MCF 10A (cell line): ENCODE measurements at regions of chr6 and their contacts with region 1.

Region 1: GRCh38 chr6:113994918-113995342 is 24.0 kb upstream of the HDAC2 start:
- DNase-seq: peak; percentile 88
- H3K4me3 Mint-ChIP-seq: no peak overlapping the region
- H3K27ac Mint-ChIP-seq: no peak overlapping the region
- H3K4me1 Mint-ChIP-seq: peaks cover 31% of the 10 kb centered on the region
- H3K27me3 Mint-ChIP-seq: no peaks in the 10 kb centered on the region
- CTCF ChIP-seq: peak; percentile 94

Region 2: DNA sequence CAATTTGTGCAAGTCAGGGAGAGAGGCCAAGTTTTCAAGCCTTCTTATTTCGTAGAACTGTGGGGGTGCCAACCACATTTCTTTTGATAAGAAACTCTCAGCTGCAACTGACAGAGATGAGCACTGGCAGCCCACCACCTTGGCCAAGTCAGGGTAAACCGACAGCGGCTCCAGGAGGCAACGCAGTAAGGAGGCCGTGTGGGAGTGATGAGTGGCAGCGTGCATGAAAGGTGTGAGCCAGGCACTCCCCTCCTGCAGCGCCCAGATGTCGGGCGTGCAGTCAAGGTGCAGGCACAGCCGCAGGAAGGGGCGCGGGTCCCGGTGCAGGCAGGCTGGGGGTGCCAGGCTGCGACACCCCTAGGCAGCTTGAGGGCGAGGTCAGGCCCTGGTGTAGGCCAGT is 25.3 kb after region 1 on chr6:
- CTCF ChIA-PET with region 1: interaction called, 4 read pairs
- POLR2A ChIA-PET with region 1: no interaction called
- intact Hi-C with region 1: loop called (anchors 2 kb)
- DNase-seq: no peak
- H3K4me3 Mint-ChIP-seq: no peak overlapping the region
- H3K27ac Mint-ChIP-seq: no peak overlapping the region
- H3K4me1 Mint-ChIP-seq: peaks cover 23% of the 10 kb centered on the region
- H3K27me3 Mint-ChIP-seq: no peaks in the 10 kb centered on the region
- CTCF ChIP-seq: no peak

Region 3: DNA sequence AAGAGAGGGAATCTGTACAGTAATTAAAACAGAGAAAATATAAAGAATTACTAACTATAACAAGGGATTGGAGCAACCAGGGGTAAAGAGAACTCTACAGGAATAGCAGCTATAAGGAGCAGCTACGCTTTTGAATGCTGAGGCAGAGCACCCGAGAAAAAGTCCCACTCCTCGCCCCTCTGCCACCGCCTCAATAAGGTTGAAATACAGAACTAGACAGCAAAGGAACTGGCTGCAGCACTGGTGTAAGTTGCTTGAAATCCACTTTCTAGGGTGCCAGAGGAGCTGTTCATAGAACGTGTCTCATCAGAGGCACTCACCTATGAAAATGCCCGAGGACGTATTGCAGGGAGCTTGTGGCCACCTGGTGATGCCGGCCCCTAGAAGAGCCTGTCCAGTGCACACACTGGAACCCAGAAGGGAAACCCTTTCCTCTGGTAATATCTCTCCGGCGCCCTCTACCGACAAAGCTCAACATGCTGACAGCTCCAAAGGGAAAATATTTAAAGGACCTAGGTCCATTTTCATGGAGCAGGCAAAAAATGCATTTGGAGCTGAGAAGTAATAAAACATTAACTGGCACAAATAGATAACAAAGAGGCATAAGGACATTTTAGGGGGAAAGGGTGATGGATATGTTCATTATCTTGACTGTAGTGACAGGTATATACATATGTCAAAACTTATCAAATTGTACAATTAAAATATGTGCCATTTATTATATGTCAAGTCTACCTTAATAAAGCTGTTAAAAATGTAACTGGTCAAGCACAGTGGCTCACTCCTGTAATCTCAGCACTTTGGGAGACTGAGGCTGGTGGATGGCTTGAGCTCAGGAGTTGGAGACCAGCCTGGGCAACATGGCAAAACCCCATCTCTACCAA is 113.4 kb after region 1 on chr6:
- CTCF ChIA-PET with region 1: interaction called, 116 read pairs
- POLR2A ChIA-PET with region 1: no interaction called
- intact Hi-C with region 1: loop called (anchors 1 kb)
- DNase-seq: peak; percentile 81
- H3K4me3 Mint-ChIP-seq: no peak overlapping the region
- H3K27ac Mint-ChIP-seq: no peak overlapping the region
- H3K4me1 Mint-ChIP-seq: no peaks in the 10 kb centered on the region
- H3K27me3 Mint-ChIP-seq: peaks cover 63% of the 10 kb centered on the region
- CTCF ChIP-seq: peak; percentile 75

Region 4: DNA sequence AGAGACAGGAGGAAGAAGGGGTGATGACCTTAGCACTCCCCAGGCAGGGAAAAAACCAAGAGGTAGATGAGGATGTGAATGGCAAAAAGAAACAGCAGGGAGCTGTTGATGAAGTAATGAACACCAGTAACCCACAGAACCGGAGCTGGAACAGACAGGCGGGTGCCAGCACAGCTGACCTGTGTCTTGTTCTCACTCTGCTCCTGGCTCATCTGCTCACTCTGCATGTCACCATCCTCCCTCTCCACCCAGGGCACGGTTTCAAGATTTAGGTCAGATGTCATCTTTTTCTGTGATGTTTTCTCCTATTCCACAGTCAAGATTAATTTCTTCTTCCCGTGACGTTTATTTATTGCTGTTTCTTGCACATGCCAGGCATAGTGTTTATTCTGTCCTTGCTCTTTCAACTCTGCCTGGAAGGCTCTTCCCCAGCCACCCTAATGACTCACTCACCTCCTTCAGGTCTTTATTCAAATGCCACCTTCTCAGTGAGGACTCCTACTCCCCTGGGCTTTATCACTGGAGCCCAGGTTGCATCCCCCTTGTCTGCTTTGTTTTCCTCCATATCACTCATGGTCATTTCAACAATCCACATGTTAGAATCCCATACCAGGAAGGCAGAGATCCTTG is 140.5 kb after region 1 on chr6:
- CTCF ChIA-PET with region 1: no interaction called
- POLR2A ChIA-PET with region 1: no interaction called
- intact Hi-C with region 1: no loop called
- DNase-seq: no peak
- H3K4me3 Mint-ChIP-seq: no peak overlapping the region
- H3K27ac Mint-ChIP-seq: no peak overlapping the region
- H3K4me1 Mint-ChIP-seq: no peaks in the 10 kb centered on the region
- H3K27me3 Mint-ChIP-seq: peaks cover 86% of the 10 kb centered on the region
- CTCF ChIP-seq: no peak

Region 5: GRCh38 chr6:114176726-114177125 is 181.8 kb after region 1 on chr6:
- CTCF ChIA-PET with region 1: no interaction called
- POLR2A ChIA-PET with region 1: no interaction called
- intact Hi-C with region 1: no loop called
- DNase-seq: no peak
- H3K4me3 Mint-ChIP-seq: no peak overlapping the region
- H3K27ac Mint-ChIP-seq: no peak overlapping the region
- H3K4me1 Mint-ChIP-seq: no peaks in the 10 kb centered on the region
- H3K27me3 Mint-ChIP-seq: peaks cover 91% of the 10 kb centered on the region
- CTCF ChIP-seq: no peak

Region 6: DNA sequence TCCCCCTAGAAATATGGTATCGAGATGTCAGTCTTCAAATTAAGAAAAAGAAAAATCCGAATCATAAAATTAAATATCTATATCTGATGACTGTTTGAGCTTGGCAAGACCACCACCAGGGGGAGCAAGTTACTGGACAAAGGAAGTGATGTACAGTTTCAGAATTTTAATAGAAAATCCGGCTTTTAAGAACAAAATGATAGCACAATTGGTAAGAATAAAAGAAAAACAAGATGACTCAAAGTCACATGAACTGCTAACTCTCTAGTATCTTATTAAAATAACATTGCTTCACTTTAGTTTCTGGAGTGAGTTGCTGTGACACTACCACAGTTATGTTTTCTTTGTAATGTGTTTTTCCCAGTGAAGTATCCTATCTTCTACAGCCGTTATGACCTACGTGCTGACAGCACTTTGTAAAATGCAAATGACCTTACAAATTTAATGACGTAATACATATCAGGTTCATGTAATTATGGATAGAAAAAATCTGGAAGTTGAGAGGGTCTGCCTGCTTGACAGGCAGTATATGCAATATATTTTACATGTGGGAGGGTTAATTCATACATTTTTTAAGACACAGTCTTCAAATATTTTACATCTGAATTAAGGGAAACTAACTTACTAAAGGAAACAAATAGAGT is 753.2 kb after region 1 on chr6:
- CTCF ChIA-PET with region 1: no interaction called
- POLR2A ChIA-PET with region 1: no interaction called
- intact Hi-C with region 1: loop called (anchors 10 kb)
- DNase-seq: peak; percentile 63
- H3K4me3 Mint-ChIP-seq: no peak overlapping the region
- H3K27ac Mint-ChIP-seq: no peak overlapping the region
- H3K4me1 Mint-ChIP-seq: no peaks in the 10 kb centered on the region
- H3K27me3 Mint-ChIP-seq: peaks cover 40% of the 10 kb centered on the region
- CTCF ChIP-seq: peak; percentile 76